H1 (cell line): ENCODE measurements at regions of chr4 and their contacts with region 1.

Region 1: GRCh38 chr4:48836658-48837057 is 5.8 kb downstream of the OCIAD1 start:
- DNase-seq: no peak
- H3K4me3 ChIP-seq: no peak overlapping the region
- H3K27ac ChIP-seq: no peak overlapping the region
- H3K4me1 ChIP-seq: no peaks in the 10 kb centered on the region
- H3K27me3 ChIP-seq: no peaks in the 10 kb centered on the region
- CTCF ChIP-seq: no peak
- EP300 ChIP-seq: no peak
- POLR2A ChIP-seq: no peak
- RAD21 ChIP-seq: no peak

Region 2: GRCh38 chr4:48858130-48858529 is 21.5 kb after region 1 on chr4:
- CTCF ChIA-PET with region 1: interaction called, 3 read pairs
- POLR2A ChIA-PET with region 1: interaction called, 113 read pairs
- DNase-seq: no peak
- H3K4me3 ChIP-seq: no peak overlapping the region
- H3K27ac ChIP-seq: no peak overlapping the region
- H3K4me1 ChIP-seq: no peaks in the 10 kb centered on the region
- H3K27me3 ChIP-seq: no peaks in the 10 kb centered on the region
- CTCF ChIP-seq: no peak
- EP300 ChIP-seq: no peak
- POLR2A ChIP-seq: no peak
- RAD21 ChIP-seq: no peak